Prostate gland (tissue), 2 donors: ENCODE measurements at regions of chr11 and their contacts with region 1.

Region 1: GRCh38 chr11:112113539-112114457 is 27.1 kb downstream of the SDHD start:
- DNase-seq: peak; percentile 10
- H3K4me3 ChIP-seq: no peak overlapping the region
- H3K27ac ChIP-seq: no peak overlapping the region
- H3K4me1 ChIP-seq: no peaks in the 10 kb centered on the region
- H3K27me3 ChIP-seq: no peaks in the 10 kb centered on the region
- CTCF ChIP-seq: peak in 3 of 4 experiments; percentile 51 to 58 (median 58)
- POLR2A ChIP-seq: no peak

Region 2: DNA sequence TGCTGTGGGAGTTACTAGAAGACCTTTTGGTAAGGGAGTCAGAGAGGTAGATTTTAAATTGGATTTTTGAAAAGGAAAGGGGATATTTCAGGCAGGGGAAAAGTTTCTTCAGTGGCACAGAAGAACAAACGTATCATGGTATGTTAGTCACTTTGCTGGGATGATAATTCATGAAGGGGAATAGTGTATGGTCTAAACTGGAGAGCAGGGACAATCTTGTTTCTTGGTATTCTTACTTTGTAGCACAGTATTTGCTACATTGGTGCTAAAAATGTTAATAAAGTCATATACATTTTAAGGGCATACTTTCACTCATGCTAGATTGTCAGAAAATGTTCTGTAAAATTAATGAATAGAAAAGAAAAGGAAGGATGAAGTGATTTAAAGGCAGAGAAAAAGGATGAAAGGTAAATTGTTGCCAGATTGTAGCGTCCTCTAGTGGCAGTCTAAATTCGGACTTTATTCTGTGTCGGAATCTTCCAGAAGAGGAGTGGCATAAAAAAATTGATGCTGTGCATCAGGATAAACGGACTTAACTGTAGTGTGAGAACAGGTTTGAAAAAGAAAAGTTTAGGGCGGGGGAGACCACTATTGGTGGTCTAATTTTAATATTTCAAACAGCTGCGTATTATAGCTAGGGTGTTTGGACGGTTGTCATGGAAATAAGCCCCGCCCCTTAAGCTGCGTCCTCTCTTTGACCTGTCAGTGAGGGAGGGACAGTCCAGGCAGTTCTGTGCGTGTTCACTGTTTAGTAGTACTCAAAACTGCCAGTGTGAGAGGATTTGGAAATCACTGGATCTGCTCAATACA is 61.2 kb after region 1 on chr11 and contains the start of gene BCO2:
- intact Hi-C with region 1: loop called (anchors 5 kb)
- DNase-seq: peak; percentile 57
- H3K4me3 ChIP-seq: peak within 1 kb of the TSS; percentile 11 to 17
- H3K27ac ChIP-seq: peak within 1 kb of the TSS; percentile 28 to 34
- H3K4me1 ChIP-seq: no peaks in the 10 kb centered on the region
- H3K27me3 ChIP-seq: no peaks in the 10 kb centered on the region
- CTCF ChIP-seq: peak; percentile 38 to 90 (median 58)
- POLR2A ChIP-seq: no peak
- total RNA-seq, gene BCO2: 3.2 to 9.1 TPM

Region 3: GRCh38 chr11:112280268-112281126 is 166.7 kb after region 1 on chr11:
- intact Hi-C with region 1: loop called (anchors 5 kb)
- DNase-seq: peak; percentile 68
- H3K4me3 ChIP-seq: peak overlapping the region; percentile 24 to 28
- H3K27ac ChIP-seq: peak overlapping the region; percentile 14 to 38
- H3K4me1 ChIP-seq: no peaks in the 10 kb centered on the region
- H3K27me3 ChIP-seq: no peaks in the 10 kb centered on the region
- CTCF ChIP-seq: peak; percentile 52 to 76 (median 62)
- POLR2A ChIP-seq: no peak